Activated CD4-positive, alpha-beta T cell treated with anti-CD3 and anti-CD28 coated beads, Interleukin-2, amount 10 ng/mL, durations not matched to agents 7 days and 5 days (primary cell): ENCODE measurements at regions of chr22 and their contacts with region 1.

Region 1: DNA sequence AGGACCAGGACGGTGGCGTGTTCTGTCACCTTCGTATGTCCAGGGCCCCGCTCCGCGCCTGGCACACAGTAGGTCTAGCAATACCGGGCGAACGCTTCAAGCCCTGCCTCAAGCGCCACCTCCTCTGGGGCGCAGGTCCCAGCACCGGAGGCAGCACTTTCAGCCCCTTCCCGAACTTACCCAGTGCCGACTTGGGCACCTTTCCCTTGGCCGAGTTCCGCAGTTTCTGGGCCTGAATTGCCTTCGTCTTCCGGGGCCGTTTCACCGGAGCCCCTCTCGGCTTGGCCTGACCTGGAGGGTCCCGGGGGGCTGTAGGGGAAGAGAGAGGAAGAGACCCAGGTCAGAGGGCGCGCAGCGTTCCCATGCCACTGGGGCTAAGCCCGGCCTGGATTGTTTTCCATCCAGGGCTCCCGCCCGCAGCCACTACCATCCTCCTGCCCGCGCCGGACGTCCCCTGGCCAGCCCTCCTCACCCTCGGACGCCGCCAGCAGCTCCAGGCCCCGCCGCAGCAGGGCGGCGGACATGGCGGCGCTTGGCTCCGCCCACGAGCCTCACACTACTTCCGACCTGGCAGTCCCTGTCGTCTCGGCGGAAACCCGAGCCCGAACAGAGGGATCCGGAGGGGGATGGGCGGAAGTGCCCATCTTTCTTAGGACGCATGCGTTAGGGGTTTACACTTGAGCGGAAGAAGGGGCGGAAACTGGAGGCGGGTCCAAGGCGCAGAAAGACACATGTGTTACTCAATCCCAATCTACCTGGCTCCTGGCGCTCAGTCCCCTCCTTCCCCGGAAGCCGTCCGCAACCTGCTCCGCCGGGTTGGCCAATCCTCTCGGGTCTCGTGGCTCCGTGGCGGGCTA is at the start of gene RPS19BP1:
- DNase-seq: peak; percentile 100
- H3K4me3 Mint-ChIP-seq: peak within 1 kb of the TSS; percentile 85
- H3K27ac Mint-ChIP-seq: peak within 1 kb of the TSS; percentile 89
- H3K4me1 Mint-ChIP-seq: peaks cover 60% of the 10 kb centered on the region
- H3K27me3 Mint-ChIP-seq: no peaks in the 10 kb centered on the region
- total RNA-seq, gene RPS19BP1: 51.8 to 69.3 TPM

Region 2: DNA sequence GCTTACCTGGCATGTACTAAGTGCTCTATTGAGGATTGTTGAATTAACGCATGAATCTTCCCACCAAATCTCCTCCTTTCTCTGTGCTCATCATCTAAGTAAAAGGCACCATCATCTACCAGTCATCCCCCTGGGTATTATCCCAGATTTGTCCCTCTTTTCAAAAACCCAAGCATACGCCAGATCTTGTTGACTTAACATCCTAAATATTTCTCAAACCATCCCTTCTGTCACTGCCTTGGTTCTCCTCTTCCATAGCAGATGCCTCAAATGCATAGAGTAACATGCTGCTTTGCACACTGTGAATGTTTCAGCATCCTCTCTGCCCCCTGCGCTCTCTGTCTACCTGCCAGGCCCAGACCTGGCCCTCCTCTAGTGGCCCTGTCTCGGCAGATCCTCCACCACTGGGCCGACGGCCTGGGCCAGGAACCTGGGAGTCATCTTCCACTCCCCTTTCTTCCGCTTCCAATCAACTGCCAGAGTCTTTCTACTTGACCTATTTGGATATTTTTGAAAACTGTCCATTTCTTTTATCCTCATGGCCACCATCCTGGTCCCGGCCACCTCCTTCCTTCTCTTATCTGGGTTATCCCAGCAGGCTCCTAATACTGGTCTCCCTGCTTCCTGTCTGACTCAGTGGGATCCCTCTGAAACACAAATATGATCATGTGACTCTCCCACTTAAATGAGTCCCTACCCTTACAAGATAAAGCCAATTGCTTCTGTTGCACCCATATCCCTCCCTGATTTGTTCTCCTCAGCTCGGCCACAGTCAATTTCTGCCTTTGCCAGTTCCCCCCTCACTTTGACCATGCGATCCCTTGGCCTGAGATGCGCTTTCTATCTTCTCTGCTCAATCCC is 136.3 kb before region 1 on chr22:
- CTCF ChIA-PET with region 1: interaction called, 13 read pairs
- POLR2A ChIA-PET with region 1: interaction called, 4 read pairs
- DNase-seq: no peak
- H3K4me3 Mint-ChIP-seq: no peak overlapping the region
- H3K27ac Mint-ChIP-seq: no peak overlapping the region
- H3K4me1 Mint-ChIP-seq: peaks cover 16% of the 10 kb centered on the region
- H3K27me3 Mint-ChIP-seq: no peaks in the 10 kb centered on the region

Region 3: GRCh38 chr22:39414886-39415285 is 117.6 kb before region 1 on chr22:
- CTCF ChIA-PET with region 1: no interaction called
- POLR2A ChIA-PET with region 1: no interaction called
- DNase-seq: no peak
- H3K4me3 Mint-ChIP-seq: no peak overlapping the region
- H3K27ac Mint-ChIP-seq: peak overlapping the region; percentile 92
- H3K4me1 Mint-ChIP-seq: peaks cover 58% of the 10 kb centered on the region
- H3K27me3 Mint-ChIP-seq: no peaks in the 10 kb centered on the region

Region 4: GRCh38 chr22:39514373-39514973 is 18.0 kb before region 1 on chr22:
- CTCF ChIA-PET with region 1: interaction called, 54 read pairs
- POLR2A ChIA-PET with region 1: interaction called, 7 read pairs
- DNase-seq: peak; percentile 65
- H3K4me3 Mint-ChIP-seq: no peak overlapping the region
- H3K27ac Mint-ChIP-seq: no peak overlapping the region
- H3K4me1 Mint-ChIP-seq: peaks cover 40% of the 10 kb centered on the region
- H3K27me3 Mint-ChIP-seq: no peaks in the 10 kb centered on the region

Region 5: GRCh38 chr22:39545386-39546365 is 13.2 kb after region 1 on chr22:
- CTCF ChIA-PET with region 1: interaction called, 24 read pairs
- POLR2A ChIA-PET with region 1: no interaction called
- DNase-seq: peak; percentile 66
- H3K4me3 Mint-ChIP-seq: no peak overlapping the region
- H3K27ac Mint-ChIP-seq: no peak overlapping the region
- H3K4me1 Mint-ChIP-seq: peaks cover 18% of the 10 kb centered on the region
- H3K27me3 Mint-ChIP-seq: peaks cover 39% of the 10 kb centered on the region

Region 6: DNA sequence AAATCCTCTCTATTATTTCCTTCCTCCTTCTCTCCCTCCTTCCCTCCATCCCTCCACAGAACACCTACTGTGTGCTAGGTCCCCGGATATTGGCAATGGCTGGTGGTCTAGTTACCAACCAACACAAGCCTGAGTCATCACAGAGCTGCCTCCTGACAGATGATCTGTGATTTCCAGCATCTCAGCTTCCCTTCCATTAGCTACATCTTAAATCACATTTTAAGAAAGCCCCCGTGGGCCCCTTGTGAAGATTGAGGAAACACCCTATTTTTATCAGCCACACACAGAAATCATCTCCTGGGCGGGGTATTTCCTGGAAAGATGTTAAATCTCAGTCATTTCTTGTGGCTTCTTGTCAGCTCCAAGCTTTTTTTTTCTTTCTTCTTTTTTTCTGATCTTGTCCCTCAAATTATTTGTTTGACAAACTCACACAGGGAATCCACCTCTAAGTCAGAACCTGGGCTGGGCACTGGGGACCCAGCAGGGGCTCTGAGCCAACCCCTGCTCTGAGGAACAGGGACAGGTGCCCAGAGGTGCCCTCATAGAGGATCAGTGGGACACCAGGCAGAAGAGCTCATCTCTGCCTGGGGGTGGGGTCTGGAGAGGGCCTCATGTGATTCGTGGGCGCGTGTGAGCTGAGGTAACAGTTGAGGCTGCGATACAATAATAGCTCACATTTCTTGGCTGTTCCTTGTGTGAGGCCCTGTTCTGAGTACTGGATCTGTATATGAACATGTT is 80.5 kb after region 1 on chr22:
- CTCF ChIA-PET with region 1: no interaction called
- POLR2A ChIA-PET with region 1: no interaction called
- DNase-seq: peak; percentile 22
- H3K4me3 Mint-ChIP-seq: peak overlapping the region; percentile 7
- H3K27ac Mint-ChIP-seq: peak overlapping the region; percentile 81
- H3K4me1 Mint-ChIP-seq: peaks cover 20% of the 10 kb centered on the region
- H3K27me3 Mint-ChIP-seq: peaks cover 18% of the 10 kb centered on the region

Region 7: GRCh38 chr22:40024201-40025061 is 492.0 kb after region 1 on chr22:
- CTCF ChIA-PET with region 1: interaction called, 57 read pairs
- POLR2A ChIA-PET with region 1: no interaction called
- DNase-seq: peak; percentile 68
- H3K4me3 Mint-ChIP-seq: no peak overlapping the region
- H3K27ac Mint-ChIP-seq: no peak overlapping the region
- H3K4me1 Mint-ChIP-seq: peaks cover 5% of the 10 kb centered on the region
- H3K27me3 Mint-ChIP-seq: no peaks in the 10 kb centered on the region

Region 8: DNA sequence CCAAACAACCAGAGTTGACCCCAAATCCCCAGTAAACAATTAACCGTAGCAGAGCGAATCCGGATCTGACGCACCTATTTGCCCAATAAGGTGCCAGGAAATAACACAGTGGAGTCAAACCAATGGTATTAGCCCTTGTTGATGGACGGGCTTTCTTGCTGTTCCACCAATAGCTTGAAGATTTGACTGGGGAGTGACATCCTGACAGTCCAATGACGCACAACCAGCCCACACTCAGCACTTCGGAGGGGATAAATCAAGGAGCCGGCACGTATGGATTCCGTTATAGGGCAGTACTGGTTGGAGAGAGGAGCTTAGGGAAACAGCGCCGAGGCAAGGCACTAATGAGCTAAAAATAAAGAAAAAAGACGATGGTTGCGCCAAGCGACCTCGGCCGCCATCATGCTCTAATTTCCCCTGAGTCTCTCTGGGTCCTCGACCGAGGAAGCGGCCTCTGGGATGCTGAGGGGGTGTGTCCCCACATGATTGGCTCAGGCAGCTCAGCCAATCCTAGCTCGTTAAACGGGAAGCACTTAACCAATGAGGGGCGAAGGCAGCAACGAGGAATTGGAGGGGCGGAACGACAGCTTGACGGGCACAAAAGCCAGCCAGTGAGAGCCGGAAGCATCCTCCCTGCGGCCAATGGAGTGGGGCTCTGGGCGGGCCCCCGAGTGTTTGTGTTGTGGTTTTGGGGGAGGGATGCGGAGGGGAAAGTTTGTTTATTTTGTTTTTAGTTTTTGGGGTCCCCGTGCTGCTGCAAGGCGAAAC is 511.8 kb after region 1 on chr22:
- CTCF ChIA-PET with region 1: interaction called, 16 read pairs
- POLR2A ChIA-PET with region 1: no interaction called
- DNase-seq: peak; percentile 99
- H3K4me3 Mint-ChIP-seq: peak overlapping the region; percentile 81
- H3K27ac Mint-ChIP-seq: peak overlapping the region; percentile 98
- H3K4me1 Mint-ChIP-seq: peaks cover 37% of the 10 kb centered on the region
- H3K27me3 Mint-ChIP-seq: peaks cover 7% of the 10 kb centered on the region